ENCODE measurements at regions of chr21 and their contacts with region 1.

Region 1: GRCh38 chr21:30480145-30480544 is at the start of gene KRTAP19-1:
- DNase-seq: no peak
- ATAC-seq: peak in 1 of 4 donors; percentile 16
- H3K4me3 ChIP-seq: no peak within 1 kb of the TSS
- H3K27ac ChIP-seq: peak within 1 kb of the TSS in 7 of 12 donors; percentile 9 to 78 (median 60)
- H3K4me1 ChIP-seq: peaks cover 0 to 13% (median 0%) of the 10 kb centered on the region in 12 donors
- H3K27me3 ChIP-seq: no peaks in the 10 kb centered on the region
- CTCF ChIP-seq: no peak
- POLR2A ChIP-seq: no peak
- total RNA-seq, gene KRTAP19-1: not detected

Region 2: GRCh38 chr21:30563072-30563471 is 82.9 kb after region 1 on chr21:
- intact Hi-C with region 1: loop called in 1 of 10 experiments (anchors 10 kb)
- DNase-seq: no peak
- ATAC-seq: peak in 2 of 4 donors; percentile 47 to 71
- H3K4me3 ChIP-seq: no peak overlapping the region
- H3K27ac ChIP-seq: no peak overlapping the region
- H3K4me1 ChIP-seq: peaks cover 0 to 8% (median 0%) of the 10 kb centered on the region in 12 donors
- H3K27me3 ChIP-seq: no peaks in the 10 kb centered on the region
- CTCF ChIP-seq: no peak
- POLR2A ChIP-seq: no peak